Posterior vena cava (tissue), 2 donors: ENCODE measurements at regions of chr11 and their contacts with region 1.

Region 1: GRCh38 chr11:95150946-95151684 is 61.5 kb downstream of the ENDOD1 start:
- DNase-seq: peak; percentile 96

Region 2: GRCh38 chr11:95076416-95076815 is 74.7 kb before region 1 on chr11:
- intact Hi-C with region 1: loop called in 1 of 2 experiments (anchors 5 kb)
- DNase-seq: no peak

Region 3: DNA sequence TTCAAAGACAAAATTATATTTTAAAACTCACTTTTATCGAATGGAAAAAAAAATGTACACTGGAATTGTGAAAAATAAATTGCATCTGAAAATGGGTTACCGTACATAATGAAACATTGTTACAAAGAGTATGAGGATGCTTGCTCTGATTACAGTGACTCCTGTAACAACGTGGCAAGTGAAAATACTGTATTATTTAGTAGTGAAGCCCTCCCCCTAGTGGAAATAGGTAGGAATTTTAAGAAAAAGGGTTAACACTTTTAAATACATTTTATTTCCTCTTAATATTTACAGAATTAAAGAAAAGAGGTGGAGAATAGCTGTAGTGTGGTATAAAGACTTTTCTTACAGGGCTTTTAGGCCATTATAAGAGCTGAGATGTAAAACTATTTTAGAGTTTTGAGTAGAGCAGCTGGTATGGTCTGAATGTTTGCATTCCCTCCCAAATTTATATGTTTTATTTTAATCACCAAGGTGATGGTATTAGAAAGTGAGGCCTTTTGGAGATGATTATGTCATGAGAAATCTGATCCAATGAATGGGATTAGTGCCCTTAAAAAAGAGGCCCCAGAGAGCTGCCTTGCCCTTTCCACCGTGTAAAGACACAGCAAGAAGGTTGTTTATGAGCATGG is 613.3 kb after region 1 on chr11:
- intact Hi-C with region 1: loop called (anchors 2 kb)
- DNase-seq: no peak

Region 4: GRCh38 chr11:96424693-96425092 is 1273.6 kb after region 1 on chr11:
- intact Hi-C with region 1: loop called in 1 of 2 experiments (anchors 10 kb)
- DNase-seq: no peak